B cell (primary cell): ENCODE measurements at regions of chr4 and their contacts with region 1.

Region 1: DNA sequence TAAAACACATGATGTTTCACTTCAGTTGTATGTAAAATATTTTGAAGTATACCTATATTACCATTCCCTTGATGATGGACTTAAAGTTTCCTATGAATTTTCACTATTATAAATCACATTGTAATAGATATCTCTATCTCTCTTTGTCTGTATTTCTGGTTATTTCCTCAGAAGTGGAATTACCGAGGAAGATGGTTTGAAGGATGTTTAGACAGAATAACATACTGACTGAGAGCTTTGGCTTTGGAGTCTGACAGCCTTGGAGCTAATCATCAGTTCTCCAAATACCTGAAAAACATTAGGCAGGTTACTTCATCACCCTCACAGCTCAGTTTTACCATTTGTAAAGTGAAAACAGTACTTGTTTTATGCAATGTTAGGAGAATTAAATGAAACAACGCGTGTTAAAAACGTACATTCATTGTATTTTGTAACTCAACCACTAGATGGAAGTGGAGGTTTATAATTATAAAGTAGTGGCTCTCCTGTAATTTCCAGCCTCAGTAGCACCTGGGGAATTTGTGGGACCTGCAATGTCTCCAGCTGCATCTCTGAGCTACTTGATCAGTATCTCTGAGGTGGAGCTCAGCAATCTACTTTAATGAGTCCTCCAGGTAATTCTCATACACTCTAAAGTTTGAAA is 14.3 kb downstream of the JCHAIN start:
- DNase-seq: peak; percentile 62
- ATAC-seq: peak; percentile 63
- H3K4me3 ChIP-seq: no peak overlapping the region
- H3K4me3 Mint-ChIP-seq: no peak overlapping the region
- H3K27ac ChIP-seq: no peak overlapping the region
- H3K27ac Mint-ChIP-seq: no peak overlapping the region
- H3K4me1 ChIP-seq: peaks cover 6 to 12% of the 10 kb centered on the region in 2 donors
- H3K4me1 Mint-ChIP-seq: peaks cover 8% of the 10 kb centered on the region
- H3K27me3 ChIP-seq: no peaks in the 10 kb centered on the region
- H3K27me3 Mint-ChIP-seq: no peaks in the 10 kb centered on the region
- CTCF ChIP-seq: peak; percentile 77

Region 2: GRCh38 chr4:70041652-70042286 is 610.2 kb before region 1 on chr4:
- CTCF ChIA-PET with region 1: no interaction called
- POLR2A ChIA-PET with region 1: no interaction called
- intact Hi-C with region 1: no loop called
- DNase-seq: no peak
- ATAC-seq: no peak
- H3K4me3 ChIP-seq: no peak overlapping the region
- H3K4me3 Mint-ChIP-seq: no peak overlapping the region
- H3K27ac ChIP-seq: no peak overlapping the region
- H3K27ac Mint-ChIP-seq: no peak overlapping the region
- H3K4me1 ChIP-seq: no peaks in the 10 kb centered on the region
- H3K4me1 Mint-ChIP-seq: no peaks in the 10 kb centered on the region
- H3K27me3 ChIP-seq: no peaks in the 10 kb centered on the region
- H3K27me3 Mint-ChIP-seq: no peaks in the 10 kb centered on the region
- CTCF ChIP-seq: no peak

Region 3: GRCh38 chr4:70251250-70251944 is 400.6 kb before region 1 on chr4:
- CTCF ChIA-PET with region 1: no interaction called
- POLR2A ChIA-PET with region 1: no interaction called
- intact Hi-C with region 1: no loop called
- DNase-seq: no peak
- ATAC-seq: no peak
- H3K4me3 ChIP-seq: no peak overlapping the region
- H3K4me3 Mint-ChIP-seq: no peak overlapping the region
- H3K27ac ChIP-seq: no peak overlapping the region
- H3K27ac Mint-ChIP-seq: no peak overlapping the region
- H3K4me1 ChIP-seq: no peaks in the 10 kb centered on the region
- H3K4me1 Mint-ChIP-seq: no peaks in the 10 kb centered on the region
- H3K27me3 ChIP-seq: no peaks in the 10 kb centered on the region
- H3K27me3 Mint-ChIP-seq: no peaks in the 10 kb centered on the region
- CTCF ChIP-seq: no peak

Region 4: GRCh38 chr4:70666369-70666768 is 14.4 kb after region 1 on chr4 and contains the start of gene JCHAIN:
- CTCF ChIA-PET with region 1: interaction called, 11 read pairs
- POLR2A ChIA-PET with region 1: interaction called, 9 read pairs
- intact Hi-C with region 1: no loop called
- DNase-seq: peak; percentile 24
- ATAC-seq: no peak
- H3K4me3 ChIP-seq: peak within 1 kb of the TSS; percentile 27 to 77 (median 57)
- H3K4me3 Mint-ChIP-seq: peak within 1 kb of the TSS; percentile 88
- H3K27ac ChIP-seq: peak within 1 kb of the TSS; percentile 4 to 78
- H3K27ac Mint-ChIP-seq: peak within 1 kb of the TSS; percentile 89
- H3K4me1 ChIP-seq: peaks cover 30 to 35% of the 10 kb centered on the region in 2 donors
- H3K4me1 Mint-ChIP-seq: peaks cover 48% of the 10 kb centered on the region
- H3K27me3 ChIP-seq: no peaks in the 10 kb centered on the region
- H3K27me3 Mint-ChIP-seq: no peaks in the 10 kb centered on the region
- CTCF ChIP-seq: no peak
- total RNA-seq, gene JCHAIN: 72.3 and 90.8 TPM in 2 replicates

Region 5: GRCh38 chr4:70678383-70678999 is 26.5 kb after region 1 on chr4:
- CTCF ChIA-PET with region 1: interaction called, 16 read pairs
- POLR2A ChIA-PET with region 1: interaction called, 6 read pairs
- intact Hi-C with region 1: no loop called
- DNase-seq: peak; percentile 45
- ATAC-seq: peak; percentile 42
- H3K4me3 ChIP-seq: peak overlapping the region in 1 of 5 experiments; percentile 14
- H3K4me3 Mint-ChIP-seq: peak overlapping the region; percentile 50
- H3K27ac ChIP-seq: peak overlapping the region; percentile 19 to 78
- H3K27ac Mint-ChIP-seq: peak overlapping the region; percentile 84
- H3K4me1 ChIP-seq: peaks cover 53 to 63% of the 10 kb centered on the region in 2 donors
- H3K4me1 Mint-ChIP-seq: peaks cover 52% of the 10 kb centered on the region
- H3K27me3 ChIP-seq: no peaks in the 10 kb centered on the region
- H3K27me3 Mint-ChIP-seq: no peaks in the 10 kb centered on the region
- CTCF ChIP-seq: no peak

Region 6: DNA sequence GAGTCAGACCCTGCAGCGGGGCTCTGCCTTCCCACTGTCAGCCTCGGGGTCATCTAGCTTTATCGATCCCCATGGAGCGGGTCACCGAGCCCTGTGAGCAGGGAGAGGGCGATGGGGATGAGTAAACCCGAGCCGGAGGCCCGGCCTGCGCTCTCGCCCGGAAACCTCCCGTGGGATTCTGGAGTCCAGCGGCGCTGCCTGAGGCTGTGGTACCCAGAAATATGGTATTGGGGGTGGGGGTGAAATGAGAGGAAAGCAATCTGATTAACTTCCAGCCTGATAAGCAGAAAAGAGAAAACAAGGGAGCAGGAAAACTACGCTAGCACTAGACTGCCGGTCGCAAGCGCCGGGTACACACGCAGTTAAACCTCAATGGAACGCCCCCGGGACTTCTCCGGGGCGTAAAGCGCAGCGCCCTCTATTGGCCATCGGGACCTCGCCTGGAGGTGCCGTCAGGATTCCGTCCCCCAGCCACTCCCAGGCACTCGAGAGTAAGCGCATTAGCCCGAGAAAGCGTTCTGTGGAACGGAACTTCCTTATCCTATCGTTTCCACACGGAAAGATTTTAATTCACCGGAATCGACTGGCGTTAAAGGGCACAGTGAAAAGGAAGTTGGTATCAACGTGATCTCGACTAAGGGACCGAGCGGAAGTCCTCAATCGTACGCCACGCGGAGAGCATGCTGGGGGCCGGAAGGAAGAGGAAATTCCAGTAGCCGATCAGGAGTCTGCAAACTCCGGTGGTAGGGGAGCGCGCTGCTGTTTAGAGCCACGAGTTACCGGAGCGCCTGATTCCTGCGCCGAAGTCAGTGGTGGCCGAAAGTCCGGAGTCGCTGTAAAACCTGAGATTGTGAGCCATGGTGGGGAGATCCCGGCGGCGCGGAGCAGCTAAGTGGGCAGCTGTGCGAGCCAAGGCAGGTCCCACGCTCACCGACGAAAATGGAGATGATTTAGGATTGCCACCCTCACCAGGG is 36.1 kb after region 1 on chr4 and contains the start of gene UTP3:
- CTCF ChIA-PET with region 1: interaction called, 16 read pairs
- POLR2A ChIA-PET with region 1: interaction called, 3 read pairs
- intact Hi-C with region 1: loop called (anchors 1 kb)
- DNase-seq: peak; percentile 96
- ATAC-seq: peak; percentile 90
- H3K4me3 ChIP-seq: peak within 1 kb of the TSS; percentile 66 to 97 (median 92)
- H3K4me3 Mint-ChIP-seq: peak within 1 kb of the TSS; percentile 100
- H3K27ac ChIP-seq: peak within 1 kb of the TSS; percentile 96 to 98
- H3K27ac Mint-ChIP-seq: peak within 1 kb of the TSS; percentile 100
- H3K4me1 ChIP-seq: peaks cover 24 to 32% of the 10 kb centered on the region in 2 donors
- H3K4me1 Mint-ChIP-seq: peaks cover 37% of the 10 kb centered on the region
- H3K27me3 ChIP-seq: no peaks in the 10 kb centered on the region
- H3K27me3 Mint-ChIP-seq: no peaks in the 10 kb centered on the region
- CTCF ChIP-seq: peak; percentile 98
- total RNA-seq, gene UTP3: 42.0 and 42.2 TPM in 2 replicates

Region 7: GRCh38 chr4:70704331-70705145 is 52.6 kb after region 1 on chr4:
- CTCF ChIA-PET with region 1: interaction called, 13 read pairs
- POLR2A ChIA-PET with region 1: no interaction called
- intact Hi-C with region 1: loop called (anchors 2 kb)
- DNase-seq: peak; percentile 85
- ATAC-seq: peak; percentile 70
- H3K4me3 ChIP-seq: peak overlapping the region; percentile 2 to 88 (median 82)
- H3K4me3 Mint-ChIP-seq: peak overlapping the region; percentile 91
- H3K27ac ChIP-seq: peak overlapping the region; percentile 62 to 80
- H3K27ac Mint-ChIP-seq: peak overlapping the region; percentile 98
- H3K4me1 ChIP-seq: peaks cover 17 to 25% of the 10 kb centered on the region in 2 donors
- H3K4me1 Mint-ChIP-seq: peaks cover 25% of the 10 kb centered on the region
- H3K27me3 ChIP-seq: no peaks in the 10 kb centered on the region
- H3K27me3 Mint-ChIP-seq: no peaks in the 10 kb centered on the region
- CTCF ChIP-seq: peak; percentile 12

Region 8: DNA sequence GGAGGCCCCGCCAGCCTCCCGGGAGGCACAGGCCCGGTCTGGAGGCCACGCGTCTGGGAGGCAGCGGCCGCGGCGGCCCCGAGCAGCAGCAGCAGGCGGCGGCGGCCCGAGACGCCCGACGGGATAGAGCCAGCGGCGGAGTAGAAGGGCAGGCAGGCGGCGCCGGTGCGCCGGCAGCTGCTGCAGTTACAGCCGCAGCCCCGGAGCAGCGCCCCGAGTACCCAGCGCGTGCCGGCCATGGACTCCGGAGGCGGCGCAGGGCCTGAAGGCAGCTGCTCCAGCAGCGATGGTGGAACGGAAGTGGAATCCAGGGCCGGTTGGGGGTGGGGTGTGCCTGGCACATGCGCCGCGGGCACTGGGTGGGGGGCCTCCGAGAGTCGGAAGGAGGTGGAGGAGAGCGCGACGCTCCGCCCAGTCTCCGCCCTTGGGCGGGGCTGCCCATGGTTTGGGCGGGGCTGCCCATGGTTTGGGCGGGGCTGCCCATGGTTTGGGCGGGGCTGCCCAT is 187.7 kb after region 1 on chr4 and contains the start of gene GRSF1:
- CTCF ChIA-PET with region 1: interaction called, 3 read pairs
- POLR2A ChIA-PET with region 1: no interaction called
- intact Hi-C with region 1: loop called (anchors 1 kb)
- DNase-seq: peak; percentile 95
- ATAC-seq: peak; percentile 86
- H3K4me3 ChIP-seq: peak within 1 kb of the TSS; percentile 27 to 79 (median 73)
- H3K4me3 Mint-ChIP-seq: peak within 1 kb of the TSS; percentile 99
- H3K27ac ChIP-seq: peak within 1 kb of the TSS; percentile 62 to 85
- H3K27ac Mint-ChIP-seq: peak within 1 kb of the TSS; percentile 95
- H3K4me1 ChIP-seq: peaks cover 22 to 46% of the 10 kb centered on the region in 2 donors
- H3K4me1 Mint-ChIP-seq: peaks cover 45% of the 10 kb centered on the region
- H3K27me3 ChIP-seq: no peaks in the 10 kb centered on the region
- H3K27me3 Mint-ChIP-seq: no peaks in the 10 kb centered on the region
- CTCF ChIP-seq: no peak
- total RNA-seq, gene GRSF1: 43.2 and 44.2 TPM in 2 replicates

Region 9: DNA sequence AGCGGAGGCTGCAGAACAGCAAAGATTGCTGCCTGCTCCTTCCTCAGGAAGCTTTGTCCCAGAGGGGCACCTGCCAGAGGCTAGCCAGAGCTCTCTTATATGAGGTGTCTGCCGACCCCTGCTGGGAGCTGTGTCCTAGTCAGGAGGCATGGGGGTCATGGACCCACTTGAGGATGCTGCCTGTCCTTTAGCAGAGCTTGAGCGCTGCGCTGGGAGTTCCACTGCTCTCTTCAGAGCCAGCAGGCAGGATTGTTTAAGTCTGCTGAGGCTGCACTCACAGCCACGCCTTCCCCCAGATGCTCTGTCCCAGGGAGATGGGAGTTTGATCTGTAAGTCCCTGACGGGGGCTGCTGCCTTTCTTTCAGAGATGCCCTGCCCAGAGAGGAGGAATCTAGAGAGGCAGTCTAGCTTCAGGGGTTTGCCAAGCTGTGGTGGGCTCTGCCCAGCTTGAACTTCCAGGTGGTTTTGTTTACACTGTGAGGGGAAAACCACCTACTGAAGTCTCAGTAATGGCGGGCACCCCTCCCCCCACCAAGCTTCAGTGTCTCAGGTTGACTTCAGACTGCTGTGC is 352.4 kb after region 1 on chr4:
- CTCF ChIA-PET with region 1: interaction called, 12 read pairs
- POLR2A ChIA-PET with region 1: no interaction called
- intact Hi-C with region 1: no loop called
- DNase-seq: peak; percentile 82
- ATAC-seq: peak; percentile 65
- H3K4me3 ChIP-seq: peak overlapping the region in 4 of 5 experiments; percentile 9 to 58 (median 30)
- H3K4me3 Mint-ChIP-seq: peak overlapping the region; percentile 87
- H3K27ac ChIP-seq: peak overlapping the region; percentile 70 to 93
- H3K27ac Mint-ChIP-seq: peak overlapping the region; percentile 96
- H3K4me1 ChIP-seq: peaks cover 67 to 68% of the 10 kb centered on the region in 2 donors
- H3K4me1 Mint-ChIP-seq: peaks cover 83% of the 10 kb centered on the region
- H3K27me3 ChIP-seq: no peaks in the 10 kb centered on the region
- H3K27me3 Mint-ChIP-seq: no peaks in the 10 kb centered on the region
- CTCF ChIP-seq: no peak

Region 10: DNA sequence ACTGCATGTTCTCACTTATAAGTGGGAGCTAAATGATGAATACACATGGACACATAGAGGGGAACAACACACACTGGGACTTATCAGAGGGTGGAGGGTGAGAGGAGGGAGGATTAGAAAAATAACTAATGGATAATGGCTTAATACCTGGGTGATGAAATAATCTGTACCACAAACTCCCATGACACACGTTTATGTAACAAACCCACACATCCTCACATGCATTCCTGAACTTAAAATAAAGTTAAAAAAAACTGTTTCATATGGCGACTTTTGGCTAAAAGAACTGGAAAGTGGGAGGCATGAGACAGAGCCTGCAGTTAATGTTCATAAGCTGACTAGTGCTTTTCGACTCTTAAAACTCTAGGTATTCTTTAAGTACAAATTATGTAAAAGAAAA is 1281.0 kb after region 1 on chr4:
- CTCF ChIA-PET with region 1: no interaction called
- POLR2A ChIA-PET with region 1: no interaction called
- intact Hi-C with region 1: no loop called
- DNase-seq: no peak
- ATAC-seq: no peak
- H3K4me3 ChIP-seq: no peak overlapping the region
- H3K4me3 Mint-ChIP-seq: no peak overlapping the region
- H3K27ac ChIP-seq: no peak overlapping the region
- H3K27ac Mint-ChIP-seq: no peak overlapping the region
- H3K4me1 ChIP-seq: no peaks in the 10 kb centered on the region
- H3K4me1 Mint-ChIP-seq: no peaks in the 10 kb centered on the region
- H3K27me3 ChIP-seq: no peaks in the 10 kb centered on the region
- H3K27me3 Mint-ChIP-seq: no peaks in the 10 kb centered on the region
- CTCF ChIP-seq: no peak